Sigmoid colon (tissue), 7 donors: ENCODE measurements at regions of chr17 and their contacts with region 1.

Region 1: GRCh38 chr17:2054512-2055291 is at the start of gene HIC1:
- DNase-seq: peak; percentile 91
- H3K4me3 ChIP-seq: peak within 1 kb of the TSS; percentile 42 to 75 (median 64)
- H3K27ac ChIP-seq: peak within 1 kb of the TSS; percentile 88 to 92 (median 91)
- H3K4me1 ChIP-seq: peaks cover 0 to 75% (median 65%) of the 10 kb centered on the region in 4 donors
- H3K27me3 ChIP-seq: peaks cover 5 to 56% (median 10%) of the 10 kb centered on the region in 3 donors
- CTCF ChIP-seq: peak; percentile 29 to 97 (median 78)
- EP300 ChIP-seq: no peak
- POLR2A ChIP-seq: peak; percentile 49 to 57
- total RNA-seq, gene HIC1: 10.4 to 44.9 (median 24.8) TPM

Region 2: GRCh38 chr17:2070241-2071023 is 15.7 kb after region 1 on chr17:
- intact Hi-C with region 1: no loop called
- DNase-seq: no peak
- H3K4me3 ChIP-seq: no peak overlapping the region
- H3K27ac ChIP-seq: peak overlapping the region; percentile 58 to 78 (median 74)
- H3K4me1 ChIP-seq: peaks cover 0 to 61% (median 45%) of the 10 kb centered on the region in 4 donors
- H3K27me3 ChIP-seq: no peaks in the 10 kb centered on the region
- CTCF ChIP-seq: no peak
- EP300 ChIP-seq: no peak
- POLR2A ChIP-seq: no peak

Region 3: GRCh38 chr17:2172077-2172851 is 117.6 kb after region 1 on chr17:
- intact Hi-C with region 1: loop called (anchors 2 kb)
- DNase-seq: peak; percentile 96
- H3K4me3 ChIP-seq: peak overlapping the region in 2 of 4 donors; percentile 7 to 29
- H3K27ac ChIP-seq: peak overlapping the region; percentile 82 to 95 (median 89)
- H3K4me1 ChIP-seq: peaks cover 0 to 63% (median 60%) of the 10 kb centered on the region in 4 donors
- H3K27me3 ChIP-seq: no peaks in the 10 kb centered on the region
- CTCF ChIP-seq: no peak
- EP300 ChIP-seq: peak in 3 of 4 donors; percentile 45 to 78 (median 73)
- POLR2A ChIP-seq: no peak

Region 4: DNA sequence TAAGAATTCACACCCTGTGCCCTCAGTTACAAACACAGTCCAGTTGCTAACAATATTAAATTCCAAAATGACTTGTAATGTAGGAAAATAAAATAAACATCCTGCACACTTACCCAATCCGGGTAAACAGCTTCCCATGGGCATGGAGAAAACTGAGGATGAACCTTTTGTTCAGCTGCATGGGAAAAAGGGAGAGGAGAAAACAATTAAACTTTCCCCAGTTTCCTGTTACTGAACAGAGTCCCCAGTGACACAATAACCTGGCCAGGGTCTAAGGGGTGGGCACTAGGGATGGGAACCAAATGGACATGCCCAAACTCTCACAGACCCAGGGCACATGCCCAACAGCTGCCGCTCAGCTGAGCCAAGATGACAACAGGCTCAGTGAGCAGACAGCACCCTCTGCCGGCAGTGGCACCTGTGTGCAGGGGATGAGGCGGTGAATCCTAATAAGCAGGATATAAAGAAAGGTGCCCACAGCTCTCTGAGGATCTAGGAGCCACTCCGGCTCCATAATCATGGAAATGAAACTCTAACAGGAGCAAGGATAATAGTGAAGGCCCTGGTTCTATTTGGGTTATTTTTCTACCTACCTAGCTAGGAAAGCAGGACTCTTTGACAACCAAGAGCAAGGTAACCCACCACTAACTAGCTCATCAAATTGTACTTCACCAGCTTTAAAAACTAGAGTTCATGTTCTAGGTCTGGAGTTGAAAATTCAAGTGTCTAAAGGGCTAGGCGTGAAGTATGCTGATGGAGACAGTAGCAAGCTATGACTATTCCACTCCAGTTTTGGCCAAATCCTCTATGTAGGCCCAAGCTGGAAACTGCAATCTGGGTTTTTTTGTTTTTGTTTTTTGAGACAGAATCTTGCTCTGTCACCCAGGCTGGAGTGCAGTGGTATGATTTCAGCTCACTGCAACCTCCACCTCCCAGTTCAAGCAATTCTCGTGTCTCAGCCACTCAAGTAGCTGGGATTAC is 190.1 kb after region 1 on chr17:
- intact Hi-C with region 1: loop called (anchors 1 kb)
- DNase-seq: peak; percentile 94
- H3K4me3 ChIP-seq: no peak overlapping the region
- H3K27ac ChIP-seq: peak overlapping the region; percentile 63 to 75 (median 68)
- H3K4me1 ChIP-seq: peaks cover 0 to 17% (median 16%) of the 10 kb centered on the region in 4 donors
- H3K27me3 ChIP-seq: no peaks in the 10 kb centered on the region
- CTCF ChIP-seq: peak; percentile 96 to 98 (median 97)
- EP300 ChIP-seq: no peak
- POLR2A ChIP-seq: no peak

Region 5: GRCh38 chr17:2282297-2282873 is 227.7 kb after region 1 on chr17:
- intact Hi-C with region 1: loop called (anchors 2 kb)
- DNase-seq: no peak
- H3K4me3 ChIP-seq: no peak overlapping the region
- H3K27ac ChIP-seq: peak overlapping the region; percentile 36 to 47 (median 42)
- H3K4me1 ChIP-seq: no peaks in the 10 kb centered on the region
- H3K27me3 ChIP-seq: no peaks in the 10 kb centered on the region
- CTCF ChIP-seq: peak; percentile 47 to 59 (median 51)
- EP300 ChIP-seq: no peak
- POLR2A ChIP-seq: no peak

Region 6: GRCh38 chr17:2351269-2351668 is 296.6 kb after region 1 on chr17:
- intact Hi-C with region 1: loop called (anchors 5 kb)
- DNase-seq: no peak
- H3K4me3 ChIP-seq: no peak overlapping the region
- H3K27ac ChIP-seq: no peak overlapping the region
- H3K4me1 ChIP-seq: no peaks in the 10 kb centered on the region
- H3K27me3 ChIP-seq: no peaks in the 10 kb centered on the region
- CTCF ChIP-seq: no peak
- EP300 ChIP-seq: no peak
- POLR2A ChIP-seq: no peak